Activated CD4-positive, alpha-beta memory T cell treated with anti-CD3 and anti-CD28 coated beads, Interleukin-2, amount 10 ng/mL, durations not matched to agents 7 days and 5 days (primary cell): ENCODE measurements at regions of chr3 and their contacts with region 1.

Region 1: GRCh38 chr3:136752422-136753325 is 496 bp upstream of the STAG1 start:
- DNase-seq: peak; percentile 99
- H3K4me3 Mint-ChIP-seq: peak overlapping the region; percentile 83
- H3K27ac Mint-ChIP-seq: peak overlapping the region; percentile 93
- H3K4me1 Mint-ChIP-seq: peaks cover 40% of the 10 kb centered on the region
- H3K27me3 Mint-ChIP-seq: no peaks in the 10 kb centered on the region

Region 2: DNA sequence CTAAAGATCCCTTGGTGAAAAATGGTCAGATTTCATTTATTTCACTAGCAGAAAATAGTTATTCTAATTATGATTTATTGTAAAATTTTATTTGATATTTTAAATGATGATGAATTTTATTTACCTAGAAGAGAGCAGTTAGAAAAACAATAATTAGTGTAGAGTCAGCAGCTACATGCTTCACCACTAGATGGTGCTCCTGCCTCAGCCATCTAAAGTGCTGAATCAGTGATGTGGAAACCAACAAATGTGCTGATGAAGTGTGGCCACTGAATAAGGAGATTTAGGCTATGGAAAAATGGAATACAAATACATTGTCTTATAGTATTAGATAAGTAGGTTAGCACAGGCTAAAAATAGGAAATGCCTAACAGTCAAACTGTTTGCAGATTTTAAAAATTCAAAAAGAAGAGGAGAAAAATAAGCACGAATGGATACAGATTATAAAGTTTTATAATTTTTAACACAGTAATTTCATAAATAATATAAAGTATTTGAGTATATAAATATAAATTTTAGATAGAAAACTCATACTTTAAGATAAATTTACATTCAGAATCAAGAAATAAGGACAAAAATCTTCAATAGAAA is 677.4 kb before region 1 on chr3:
- CTCF ChIA-PET with region 1: interaction called, 53 read pairs
- POLR2A ChIA-PET with region 1: interaction called, 16 read pairs
- DNase-seq: peak; percentile 78
- H3K4me3 Mint-ChIP-seq: no peak overlapping the region
- H3K27ac Mint-ChIP-seq: no peak overlapping the region
- H3K4me1 Mint-ChIP-seq: peaks cover 7% of the 10 kb centered on the region
- H3K27me3 Mint-ChIP-seq: peaks cover 2% of the 10 kb centered on the region

Region 3: GRCh38 chr3:136305878-136306277 is 446.8 kb before region 1 on chr3:
- CTCF ChIA-PET with region 1: interaction called, 21 read pairs
- POLR2A ChIA-PET with region 1: interaction called, 6 read pairs
- DNase-seq: no peak
- H3K4me3 Mint-ChIP-seq: no peak overlapping the region
- H3K27ac Mint-ChIP-seq: no peak overlapping the region
- H3K4me1 Mint-ChIP-seq: no peaks in the 10 kb centered on the region
- H3K27me3 Mint-ChIP-seq: no peaks in the 10 kb centered on the region

Region 4: DNA sequence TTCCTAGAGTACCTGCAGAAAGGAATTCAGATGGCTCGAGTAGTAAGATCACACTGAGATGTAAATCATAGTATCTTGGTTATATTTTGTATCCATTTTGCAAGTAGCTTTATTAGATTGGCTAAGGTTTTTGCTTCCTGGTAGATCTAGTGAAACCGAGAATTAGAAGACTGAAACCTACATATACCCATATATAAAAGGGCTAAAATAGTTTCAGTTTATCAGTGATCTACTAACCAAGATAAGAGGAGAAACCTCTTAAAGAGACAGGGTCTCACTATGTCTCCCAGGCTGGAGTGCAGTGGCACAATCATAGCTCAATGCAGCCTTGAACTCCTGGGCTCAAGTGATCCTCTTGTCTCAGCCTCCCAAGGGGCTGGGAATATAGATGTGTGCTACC is 367.2 kb before region 1 on chr3:
- CTCF ChIA-PET with region 1: interaction called, 93 read pairs
- POLR2A ChIA-PET with region 1: interaction called, 6 read pairs
- DNase-seq: no peak
- H3K4me3 Mint-ChIP-seq: no peak overlapping the region
- H3K27ac Mint-ChIP-seq: no peak overlapping the region
- H3K4me1 Mint-ChIP-seq: peaks cover 5% of the 10 kb centered on the region
- H3K27me3 Mint-ChIP-seq: no peaks in the 10 kb centered on the region

Region 5: GRCh38 chr3:136545664-136546268 is 206.9 kb before region 1 on chr3:
- CTCF ChIA-PET with region 1: interaction called, 24 read pairs
- POLR2A ChIA-PET with region 1: interaction called, 3 read pairs
- DNase-seq: no peak
- H3K4me3 Mint-ChIP-seq: no peak overlapping the region
- H3K27ac Mint-ChIP-seq: no peak overlapping the region
- H3K4me1 Mint-ChIP-seq: peaks cover 2% of the 10 kb centered on the region
- H3K27me3 Mint-ChIP-seq: no peaks in the 10 kb centered on the region

Region 6: DNA sequence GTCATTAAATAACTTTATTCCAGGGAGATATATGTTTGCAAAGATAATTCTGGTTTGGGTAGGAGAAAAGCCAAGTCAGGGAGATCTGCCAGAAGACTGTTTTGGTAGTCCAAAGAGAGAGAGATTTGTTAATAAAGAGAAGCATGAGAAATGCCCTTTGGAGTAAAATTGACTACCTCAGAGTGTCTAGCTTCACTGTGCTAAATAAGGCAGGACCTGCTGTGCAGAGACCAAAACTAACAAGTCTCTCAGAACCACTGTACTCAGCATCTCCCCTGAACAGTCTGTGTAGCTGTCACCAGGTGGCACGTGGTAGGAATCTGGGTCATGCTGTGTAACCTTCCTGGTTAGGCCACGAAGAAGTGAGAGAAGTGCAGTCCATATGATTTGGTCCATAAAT is 34.7 kb after region 1 on chr3:
- CTCF ChIA-PET with region 1: interaction called, 9 read pairs
- POLR2A ChIA-PET with region 1: interaction called, 17 read pairs
- DNase-seq: peak; percentile 54
- H3K4me3 Mint-ChIP-seq: no peak overlapping the region
- H3K27ac Mint-ChIP-seq: peak overlapping the region; percentile 57
- H3K4me1 Mint-ChIP-seq: peaks cover 15% of the 10 kb centered on the region
- H3K27me3 Mint-ChIP-seq: peaks cover 5% of the 10 kb centered on the region

Region 7: GRCh38 chr3:136919799-136920580 is 167.3 kb after region 1 on chr3:
- CTCF ChIA-PET with region 1: interaction called, 6 read pairs
- POLR2A ChIA-PET with region 1: interaction called, 10 read pairs
- DNase-seq: no peak
- H3K4me3 Mint-ChIP-seq: peak overlapping the region; percentile 56
- H3K27ac Mint-ChIP-seq: peak overlapping the region; percentile 85
- H3K4me1 Mint-ChIP-seq: peaks cover 67% of the 10 kb centered on the region
- H3K27me3 Mint-ChIP-seq: no peaks in the 10 kb centered on the region